ENCODE measurements at regions of chr1 and their contacts with region 1.

Region 1: GRCh38 chr1:150578965-150579798 is at the start of gene MCL1:
- DNase-seq: peak; percentile 69
- ATAC-seq: peak; percentile 90
- H3K4me3 ChIP-seq: peak within 1 kb of the TSS; percentile 85
- H3K27ac ChIP-seq: peak within 1 kb of the TSS; percentile 96
- H3K4me1 ChIP-seq: peaks cover 3% of the 10 kb centered on the region; the same call in 1 of the 2 replicates
- H3K27me3 ChIP-seq: no peaks in the 10 kb centered on the region
- CTCF ChIP-seq: no peak
- EP300 ChIP-seq: peak in 1 of 2 experiments; percentile 47; a peak in 1 of 4 replicates
- POLR2A ChIP-seq: peak; percentile 94
- RAD21 ChIP-seq: 0 out of 2 replicates have a peak, but pooled peaks have one; percentile 15
- polyA plus RNA-seq, gene MCL1: 18.1 to 25.5 TPM

Region 2: GRCh38 chr1:150548632-150549495 is 30.3 kb before region 1 on chr1 and contains the start of gene ADAMTSL4:
- CTCF ChIA-PET with region 1: no interaction called
- POLR2A ChIA-PET with region 1: no interaction called
- RAD21 ChIA-PET with region 1: no interaction called
- SMC1A ChIA-PET with region 1: no interaction called
- in situ Hi-C with region 1: no loop called
- intact Hi-C with region 1: no loop called
- DNase-seq: no peak
- ATAC-seq: peak; percentile 81
- H3K4me3 ChIP-seq: peak within 1 kb of the TSS; percentile 65
- H3K27ac ChIP-seq: no peak within 1 kb of the TSS
- H3K4me1 ChIP-seq: peaks cover 3% of the 10 kb centered on the region; the same call in 1 of the 2 replicates
- H3K27me3 ChIP-seq: no peaks in the 10 kb centered on the region; a peak in 1 of 4 replicates
- CTCF ChIP-seq: no peak
- EP300 ChIP-seq: no peak
- POLR2A ChIP-seq: peak; percentile 24; the same call in 1 of the 2 replicates
- RAD21 ChIP-seq: no peak
- polyA plus RNA-seq, gene ADAMTSL4: 0.04 to 0.05 TPM

Region 3: GRCh38 chr1:150613061-150613920 is 34.1 kb after region 1 on chr1:
- CTCF ChIA-PET with region 1: interaction called, 15 read pairs
- POLR2A ChIA-PET with region 1: interaction called, 21 read pairs
- RAD21 ChIA-PET with region 1: interaction called, 8 read pairs
- SMC1A ChIA-PET with region 1: interaction called, 27 read pairs
- in situ Hi-C with region 1: no loop called
- intact Hi-C with region 1: loop called (anchors 2 kb)
- DNase-seq: peak; percentile 79
- ATAC-seq: peak; percentile 68
- H3K4me3 ChIP-seq: no peak overlapping the region
- H3K27ac ChIP-seq: peak overlapping the region; percentile 80
- H3K4me1 ChIP-seq: peaks cover 41% of the 10 kb centered on the region
- H3K27me3 ChIP-seq: no peaks in the 10 kb centered on the region
- CTCF ChIP-seq: no peak
- EP300 ChIP-seq: peak; percentile 85 to 98
- POLR2A ChIP-seq: 0 out of 2 replicates have a peak, but pooled peaks have one; percentile 20
- RAD21 ChIP-seq: no peak

Region 4: DNA sequence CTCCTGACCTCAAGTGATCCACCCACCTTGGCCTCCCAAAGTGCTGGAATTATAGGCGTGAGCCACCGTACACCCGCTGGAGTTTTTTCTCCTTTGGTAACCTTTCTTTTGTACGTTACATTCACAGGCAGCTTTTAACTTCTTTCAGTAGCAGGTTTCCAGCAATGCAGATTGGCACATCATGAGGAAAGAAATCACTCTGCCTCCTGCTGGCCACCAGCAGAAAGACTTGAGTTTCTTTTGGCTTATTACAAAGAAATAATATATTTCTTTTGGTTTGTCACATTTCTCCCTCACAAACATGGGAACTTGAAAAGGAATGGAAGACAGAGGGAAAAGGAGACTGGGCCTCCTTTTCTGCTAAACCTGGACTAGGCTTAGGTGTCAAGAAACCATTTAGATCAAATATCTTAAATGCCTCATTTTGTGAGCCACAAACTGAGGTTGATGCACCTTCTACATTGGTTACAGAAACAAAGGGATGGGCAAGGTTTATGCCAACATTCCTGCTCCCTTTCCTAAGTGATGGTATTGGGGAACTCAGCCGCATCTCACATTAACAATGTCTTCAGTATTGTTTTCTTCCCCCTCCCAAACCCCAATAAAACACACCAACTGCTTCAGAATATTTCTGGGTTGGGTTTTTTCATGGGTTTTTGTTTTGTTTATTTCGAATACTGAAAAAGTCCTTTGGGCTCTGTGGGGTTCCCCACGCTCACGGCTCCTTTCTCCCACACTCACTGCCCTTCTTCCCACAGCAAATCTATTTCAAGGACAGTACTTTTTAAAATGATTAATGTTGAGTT is 42.5 kb after region 1 on chr1:
- CTCF ChIA-PET with region 1: interaction called, 28 read pairs
- POLR2A ChIA-PET with region 1: interaction called, 8 read pairs
- RAD21 ChIA-PET with region 1: interaction called, 29 read pairs
- SMC1A ChIA-PET with region 1: interaction called, 27 read pairs
- in situ Hi-C with region 1: no loop called
- intact Hi-C with region 1: no loop called
- DNase-seq: no peak
- ATAC-seq: peak; percentile 62
- H3K4me3 ChIP-seq: no peak overlapping the region
- H3K27ac ChIP-seq: peak overlapping the region; percentile 67
- H3K4me1 ChIP-seq: peaks cover 26% of the 10 kb centered on the region
- H3K27me3 ChIP-seq: no peaks in the 10 kb centered on the region
- CTCF ChIP-seq: peak; percentile 57 to 74 (median 63); a peak in 5 of 6 replicates
- EP300 ChIP-seq: no peak
- POLR2A ChIP-seq: no peak
- RAD21 ChIP-seq: peak; percentile 63